PC-3 (cell line): ENCODE measurements at regions of chr4 and their contacts with region 1.

Region 1: DNA sequence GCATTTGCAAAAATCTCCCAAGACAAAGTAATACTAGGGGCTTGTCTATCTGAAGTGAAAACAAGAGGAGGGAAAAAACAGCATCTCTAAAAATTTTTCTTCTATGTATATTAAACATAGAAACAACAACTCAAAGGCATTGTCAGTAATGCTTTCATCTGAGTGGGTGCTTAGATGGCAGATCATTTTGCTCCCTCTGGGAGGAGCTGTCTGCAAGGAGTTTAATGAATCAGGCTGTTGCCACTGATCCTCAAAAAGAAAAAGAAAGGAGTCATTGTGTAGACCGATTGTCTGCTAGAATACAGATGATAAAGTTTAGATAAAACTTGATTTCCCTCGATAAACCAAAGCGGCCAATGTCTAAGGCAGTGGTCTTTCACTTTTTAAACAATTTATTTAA is 49.7 kb upstream of the KLHL8 start:
- DNase-seq: peak; percentile 57
- ATAC-seq: peak; percentile 90
- H3K4me3 ChIP-seq: no peak overlapping the region
- H3K27ac ChIP-seq: no peak overlapping the region
- H3K4me1 ChIP-seq: no peaks in the 10 kb centered on the region
- H3K27me3 ChIP-seq: no peaks in the 10 kb centered on the region
- CTCF ChIP-seq: peak; percentile 69

Region 2: GRCh38 chr4:87304671-87305432 is 34.7 kb after region 1 on chr4:
- CTCF ChIA-PET with region 1: interaction called, 6 read pairs
- POLR2A ChIA-PET with region 1: no interaction called
- intact Hi-C with region 1: loop called (anchors 5 kb)
- DNase-seq: peak; percentile 73
- ATAC-seq: peak; percentile 97
- H3K4me3 ChIP-seq: peak overlapping the region; percentile 78
- H3K27ac ChIP-seq: peak overlapping the region; percentile 67
- H3K4me1 ChIP-seq: peaks cover 13% of the 10 kb centered on the region
- H3K27me3 ChIP-seq: no peaks in the 10 kb centered on the region
- CTCF ChIP-seq: no peak

Region 3: DNA sequence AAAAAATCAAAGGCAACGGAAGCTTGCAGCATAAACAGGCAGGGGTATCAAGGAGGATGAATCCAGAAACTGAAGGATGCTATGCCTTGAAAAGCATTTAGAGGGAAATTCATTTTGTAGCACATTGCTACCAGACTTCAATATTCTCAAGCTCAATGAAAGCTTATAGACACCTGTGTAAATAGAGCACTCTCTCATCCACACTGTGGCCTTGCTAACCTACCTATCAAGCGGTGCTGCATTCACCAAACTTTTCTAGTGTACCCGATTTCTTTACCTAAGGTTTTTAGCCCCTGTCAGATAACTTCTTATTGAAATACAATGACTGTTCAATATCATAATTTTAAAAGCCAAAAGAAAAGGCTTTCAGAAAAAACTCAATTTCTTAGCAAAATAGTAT is 72.7 kb after region 1 on chr4:
- CTCF ChIA-PET with region 1: no interaction called
- POLR2A ChIA-PET with region 1: no interaction called
- intact Hi-C with region 1: loop called (anchors 5 kb)
- DNase-seq: no peak
- ATAC-seq: no peak
- H3K4me3 ChIP-seq: no peak overlapping the region
- H3K27ac ChIP-seq: no peak overlapping the region
- H3K4me1 ChIP-seq: no peaks in the 10 kb centered on the region
- H3K27me3 ChIP-seq: no peaks in the 10 kb centered on the region
- CTCF ChIP-seq: no peak

Region 4: GRCh38 chr4:87530868-87531267 is 260.7 kb after region 1 on chr4:
- CTCF ChIA-PET with region 1: no interaction called
- POLR2A ChIA-PET with region 1: no interaction called
- intact Hi-C with region 1: no loop called
- DNase-seq: no peak
- ATAC-seq: no peak
- H3K4me3 ChIP-seq: no peak overlapping the region
- H3K27ac ChIP-seq: no peak overlapping the region
- H3K4me1 ChIP-seq: no peaks in the 10 kb centered on the region
- H3K27me3 ChIP-seq: no peaks in the 10 kb centered on the region
- CTCF ChIP-seq: no peak

Region 5: DNA sequence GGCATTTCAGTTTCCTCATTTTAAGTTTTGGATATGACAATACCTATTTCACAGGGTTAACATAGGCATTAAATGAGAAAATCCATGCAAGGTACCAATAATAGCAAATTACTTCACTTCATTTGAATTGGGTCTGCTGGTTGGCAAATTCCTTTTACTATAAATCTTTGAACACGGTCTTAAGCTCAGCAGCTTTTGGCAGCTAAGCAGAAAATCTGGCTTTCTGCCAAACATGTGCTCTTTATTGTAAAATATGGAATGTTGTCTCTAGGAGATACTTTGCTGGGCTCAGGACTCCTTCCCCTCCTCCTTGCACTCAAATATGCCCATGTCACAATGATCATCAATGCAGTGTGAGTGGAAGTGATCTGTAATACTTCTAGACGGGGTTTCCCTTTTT is 363.1 kb after region 1 on chr4:
- CTCF ChIA-PET with region 1: no interaction called
- POLR2A ChIA-PET with region 1: no interaction called
- intact Hi-C with region 1: no loop called
- DNase-seq: no peak
- ATAC-seq: no peak
- H3K4me3 ChIP-seq: no peak overlapping the region
- H3K27ac ChIP-seq: no peak overlapping the region
- H3K4me1 ChIP-seq: no peaks in the 10 kb centered on the region
- H3K27me3 ChIP-seq: no peaks in the 10 kb centered on the region
- CTCF ChIP-seq: no peak